Activated CD4-positive, alpha-beta memory T cell treated with anti-CD3 and anti-CD28 coated beads for 36 hours (primary cell): ENCODE measurements at regions of chr20 and their contacts with region 1.

Region 1: GRCh38 chr20:8454137-8454712 is 322.2 kb downstream of the PLCB1 start:
- DNase-seq: peak; percentile 23
- H3K4me3 Mint-ChIP-seq: no peak overlapping the region
- H3K27ac Mint-ChIP-seq: no peak overlapping the region
- H3K4me1 Mint-ChIP-seq: peaks cover 7% of the 10 kb centered on the region
- H3K27me3 Mint-ChIP-seq: no peaks in the 10 kb centered on the region

Region 2: DNA sequence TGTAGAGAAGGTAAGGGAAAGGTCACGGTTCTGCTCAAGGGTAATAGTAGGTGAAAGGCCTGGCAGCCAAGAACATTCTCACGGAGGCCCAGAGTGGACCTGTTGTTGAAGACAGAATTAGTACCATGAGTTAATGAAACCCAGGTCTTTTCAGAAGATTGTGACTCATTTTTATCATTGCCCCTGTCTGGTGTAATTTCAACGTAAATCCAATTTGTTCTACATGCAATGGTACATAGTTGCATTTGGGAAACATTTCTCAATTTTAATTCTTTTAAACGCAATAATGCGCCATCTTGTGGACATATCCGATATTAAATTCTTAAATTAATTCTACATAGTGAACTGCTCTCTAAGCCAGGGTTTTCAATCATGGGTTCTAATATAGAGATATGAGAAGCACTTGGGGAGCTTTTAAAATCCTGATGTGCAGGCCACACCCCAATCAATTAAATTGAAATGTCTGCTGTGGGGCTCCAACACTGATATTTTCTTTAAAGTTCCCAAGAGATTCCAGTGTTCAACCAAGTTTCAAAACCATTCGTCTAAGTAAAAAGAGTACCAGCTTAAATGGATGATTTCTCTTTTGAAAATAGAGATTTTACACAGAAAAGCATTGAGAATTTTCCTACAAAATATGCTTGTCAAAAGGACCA is 64.7 kb before region 1 on chr20:
- CTCF ChIA-PET with region 1: no interaction called
- POLR2A ChIA-PET with region 1: no interaction called
- intact Hi-C with region 1: no loop called
- DNase-seq: no peak
- H3K4me3 Mint-ChIP-seq: no peak overlapping the region
- H3K27ac Mint-ChIP-seq: no peak overlapping the region
- H3K4me1 Mint-ChIP-seq: no peaks in the 10 kb centered on the region
- H3K27me3 Mint-ChIP-seq: no peaks in the 10 kb centered on the region

Region 3: DNA sequence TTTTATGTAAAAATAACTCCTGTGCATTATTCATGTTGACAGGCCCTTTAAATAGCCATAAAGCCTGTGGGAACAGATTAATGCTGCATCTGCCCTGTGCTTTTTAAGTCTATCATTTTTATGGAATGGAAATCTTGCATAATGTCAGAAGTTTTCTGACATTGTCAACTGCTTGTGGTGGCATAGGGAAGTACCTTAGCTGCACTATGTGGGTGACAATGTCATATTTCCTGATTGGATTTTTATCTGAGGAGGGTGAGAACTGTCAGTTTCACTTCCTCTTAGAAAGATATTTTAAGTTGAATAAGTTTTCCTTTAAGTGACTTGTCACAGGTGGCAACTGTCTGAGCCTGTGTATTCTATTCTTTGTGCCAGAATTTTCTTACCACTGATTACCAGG is 54.3 kb before region 1 on chr20:
- CTCF ChIA-PET with region 1: interaction called, 3 read pairs
- POLR2A ChIA-PET with region 1: no interaction called
- intact Hi-C with region 1: loop called (anchors 1 kb)
- DNase-seq: no peak
- H3K4me3 Mint-ChIP-seq: no peak overlapping the region
- H3K27ac Mint-ChIP-seq: no peak overlapping the region
- H3K4me1 Mint-ChIP-seq: peaks cover 4% of the 10 kb centered on the region
- H3K27me3 Mint-ChIP-seq: peaks cover 1% of the 10 kb centered on the region

Region 4: GRCh38 chr20:8633366-8633765 is 179.1 kb after region 1 on chr20:
- CTCF ChIA-PET with region 1: no interaction called
- POLR2A ChIA-PET with region 1: no interaction called
- intact Hi-C with region 1: no loop called
- DNase-seq: no peak
- H3K4me3 Mint-ChIP-seq: no peak overlapping the region
- H3K27ac Mint-ChIP-seq: no peak overlapping the region
- H3K4me1 Mint-ChIP-seq: no peaks in the 10 kb centered on the region
- H3K27me3 Mint-ChIP-seq: no peaks in the 10 kb centered on the region